ENCODE measurements at regions of chr10 and their contacts with region 1.

Region 1: GRCh38 chr10:102352066-102352715 is 43.3 kb upstream of the NFKB2 start:
- DNase-seq: peak; percentile 77
- H3K4me3 Mint-ChIP-seq: no peak overlapping the region
- H3K27ac Mint-ChIP-seq: no peak overlapping the region
- H3K4me1 Mint-ChIP-seq: peaks cover 4% of the 10 kb centered on the region
- H3K27me3 Mint-ChIP-seq: no peaks in the 10 kb centered on the region

Region 2: GRCh38 chr10:102245101-102245931 is 106.9 kb before region 1 on chr10 and contains the start of gene GBF1:
- CTCF ChIA-PET with region 1: interaction called, 1,053 read pairs
- POLR2A ChIA-PET with region 1: interaction called, 3 read pairs
- intact Hi-C with region 1: no loop called
- DNase-seq: peak; percentile 95
- H3K4me3 Mint-ChIP-seq: peak within 1 kb of the TSS; percentile 100
- H3K27ac Mint-ChIP-seq: peak within 1 kb of the TSS; percentile 95
- H3K4me1 Mint-ChIP-seq: peaks cover 51% of the 10 kb centered on the region
- H3K27me3 Mint-ChIP-seq: peaks cover 15% of the 10 kb centered on the region
- total RNA-seq, gene GBF1: 42.2 to 44.0 TPM

Region 3: DNA sequence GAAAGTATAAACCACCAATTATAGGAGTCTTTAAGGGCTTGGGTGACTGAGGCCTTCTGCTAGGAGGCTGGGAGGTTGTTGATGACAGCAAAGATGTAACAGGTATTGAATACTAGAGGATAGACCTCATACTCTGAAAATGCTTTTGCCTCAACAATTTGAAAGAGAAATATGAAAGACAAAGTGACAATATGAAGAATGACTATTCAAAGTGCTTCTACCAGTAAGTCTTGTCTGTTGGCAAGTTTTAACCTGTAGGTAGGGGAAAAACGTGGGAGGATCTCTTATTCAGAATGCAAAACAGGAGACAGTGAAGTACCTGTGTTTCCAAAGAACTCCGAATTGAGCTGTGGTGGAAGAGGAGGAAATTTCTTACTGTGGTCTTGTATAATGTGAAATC is 68.7 kb before region 1 on chr10:
- CTCF ChIA-PET with region 1: interaction called, 14 read pairs
- POLR2A ChIA-PET with region 1: no interaction called
- intact Hi-C with region 1: no loop called
- DNase-seq: peak; percentile 40
- H3K4me3 Mint-ChIP-seq: peak overlapping the region; percentile 46
- H3K27ac Mint-ChIP-seq: peak overlapping the region; percentile 93
- H3K4me1 Mint-ChIP-seq: peaks cover 85% of the 10 kb centered on the region
- H3K27me3 Mint-ChIP-seq: no peaks in the 10 kb centered on the region

Region 4: GRCh38 chr10:102334101-102334500 is 18.1 kb before region 1 on chr10:
- CTCF ChIA-PET with region 1: interaction called, 11 read pairs
- POLR2A ChIA-PET with region 1: no interaction called
- intact Hi-C with region 1: no loop called
- DNase-seq: no peak
- H3K4me3 Mint-ChIP-seq: no peak overlapping the region
- H3K27ac Mint-ChIP-seq: no peak overlapping the region
- H3K4me1 Mint-ChIP-seq: peaks cover 24% of the 10 kb centered on the region
- H3K27me3 Mint-ChIP-seq: no peaks in the 10 kb centered on the region

Region 5: GRCh38 chr10:102399217-102400089 is 47.3 kb after region 1 on chr10:
- CTCF ChIA-PET with region 1: interaction called, 12 read pairs
- POLR2A ChIA-PET with region 1: no interaction called
- intact Hi-C with region 1: no loop called
- DNase-seq: peak; percentile 92
- H3K4me3 Mint-ChIP-seq: peak overlapping the region; percentile 68
- H3K27ac Mint-ChIP-seq: peak overlapping the region; percentile 74
- H3K4me1 Mint-ChIP-seq: peaks cover 40% of the 10 kb centered on the region
- H3K27me3 Mint-ChIP-seq: no peaks in the 10 kb centered on the region

Region 6: DNA sequence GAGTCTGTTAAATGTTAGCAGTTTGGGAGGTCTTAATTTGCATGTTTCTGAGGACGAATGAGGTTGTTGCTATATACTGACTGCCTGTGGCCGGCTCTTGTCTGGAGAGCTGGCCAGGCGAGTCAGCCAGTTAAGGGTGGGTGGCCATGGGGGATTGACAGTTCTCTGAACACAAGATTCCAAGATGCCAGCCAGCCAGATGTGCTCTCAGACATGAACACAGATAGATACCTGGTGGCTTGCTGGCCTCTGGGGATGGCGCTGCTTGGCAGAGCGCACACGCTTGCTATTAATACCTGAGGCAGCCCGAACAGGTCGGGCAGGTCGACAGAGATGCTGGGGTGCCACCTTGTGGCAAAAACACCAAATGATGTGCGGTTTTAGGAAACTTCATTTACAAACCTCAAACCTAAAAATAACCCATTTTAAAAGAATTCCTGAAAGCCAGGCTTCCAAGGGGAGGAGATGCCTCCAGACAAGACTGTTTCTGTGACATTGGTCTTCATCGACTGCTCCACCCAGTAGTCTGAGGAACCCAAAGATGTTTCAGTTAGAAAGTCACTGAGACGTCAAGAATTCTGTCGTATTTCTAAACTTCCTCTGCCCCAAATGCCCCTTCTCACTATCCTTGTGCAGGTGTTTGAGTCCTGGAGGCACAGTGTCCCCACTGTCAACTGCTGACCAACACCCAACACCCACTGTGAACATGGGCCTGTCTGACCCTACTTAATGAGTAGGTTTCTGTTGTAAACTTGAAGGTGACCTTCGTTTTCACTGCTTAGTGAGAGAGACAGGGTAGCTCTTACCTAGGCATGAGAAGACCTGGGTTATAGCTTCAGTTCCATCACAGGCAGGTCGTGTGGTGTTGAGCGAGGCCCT is 717.5 kb after region 1 on chr10:
- CTCF ChIA-PET with region 1: no interaction called
- POLR2A ChIA-PET with region 1: no interaction called
- intact Hi-C with region 1: no loop called
- DNase-seq: peak; percentile 80
- H3K4me3 Mint-ChIP-seq: no peak overlapping the region
- H3K27ac Mint-ChIP-seq: no peak overlapping the region
- H3K4me1 Mint-ChIP-seq: peaks cover 19% of the 10 kb centered on the region
- H3K27me3 Mint-ChIP-seq: no peaks in the 10 kb centered on the region